CD4-positive, alpha-beta memory T cell (primary cell): ENCODE measurements at regions of chr6 and their contacts with region 1.

Region 1: DNA sequence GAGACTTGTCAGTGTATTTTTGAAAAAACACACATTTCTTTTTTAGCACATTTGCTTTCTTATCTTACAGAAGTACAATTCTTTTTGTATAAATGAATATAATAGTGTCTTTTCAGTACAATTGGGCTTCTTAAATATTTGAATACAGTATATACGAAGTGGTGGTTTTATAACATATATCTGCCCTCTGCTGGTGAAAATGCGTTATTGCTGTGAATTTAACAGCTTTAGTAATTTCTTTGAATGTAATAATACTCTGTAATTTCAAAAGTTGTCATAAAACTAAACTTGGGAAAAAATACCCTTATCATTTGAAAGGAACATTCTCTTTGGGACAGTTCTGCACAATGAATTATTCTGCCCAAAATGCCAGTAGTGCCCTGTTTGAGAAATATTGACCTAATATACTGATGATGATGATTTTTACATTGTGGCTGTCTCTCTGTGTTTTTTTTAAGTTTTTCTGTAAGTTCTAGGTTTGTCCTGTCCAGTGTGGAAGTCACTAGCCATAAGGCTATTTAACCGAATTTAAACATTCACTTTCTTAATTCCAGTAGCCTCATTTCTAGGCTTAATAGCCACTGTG is 19.0 kb downstream of the SMAP1 start:
- DNase-seq: peak in 4 of 5 donors; percentile 35 to 43 (median 38)
- H3K4me3 ChIP-seq: no peak overlapping the region
- H3K4me3 Mint-ChIP-seq: no peak overlapping the region
- H3K27ac ChIP-seq: no peak overlapping the region
- H3K27ac Mint-ChIP-seq: peak overlapping the region in 1 of 7 donors; percentile 40
- H3K4me1 ChIP-seq: peaks cover 32% of the 10 kb centered on the region
- H3K4me1 Mint-ChIP-seq: peaks cover 41 to 70% (median 48%) of the 10 kb centered on the region in 4 donors
- H3K27me3 ChIP-seq: no peaks in the 10 kb centered on the region
- H3K27me3 Mint-ChIP-seq: no peaks in the 10 kb centered on the region

Region 2: GRCh38 chr6:69835414-69836179 is 851.0 kb before region 1 on chr6:
- CTCF ChIA-PET with region 1: no interaction called
- POLR2A ChIA-PET with region 1: no interaction called
- intact Hi-C with region 1: no loop called
- DNase-seq: peak in 4 of 5 donors; percentile 26 to 39 (median 29)
- H3K4me3 ChIP-seq: no peak overlapping the region
- H3K4me3 Mint-ChIP-seq: peak overlapping the region in 1 of 8 donors; percentile 7
- H3K27ac ChIP-seq: no peak overlapping the region
- H3K27ac Mint-ChIP-seq: no peak overlapping the region
- H3K4me1 ChIP-seq: peaks cover 5% of the 10 kb centered on the region
- H3K4me1 Mint-ChIP-seq: peaks cover 0 to 7% (median 3%) of the 10 kb centered on the region in 4 donors
- H3K27me3 ChIP-seq: no peaks in the 10 kb centered on the region
- H3K27me3 Mint-ChIP-seq: peaks cover 9 to 11% of the 10 kb centered on the region in 2 donors

Region 3: DNA sequence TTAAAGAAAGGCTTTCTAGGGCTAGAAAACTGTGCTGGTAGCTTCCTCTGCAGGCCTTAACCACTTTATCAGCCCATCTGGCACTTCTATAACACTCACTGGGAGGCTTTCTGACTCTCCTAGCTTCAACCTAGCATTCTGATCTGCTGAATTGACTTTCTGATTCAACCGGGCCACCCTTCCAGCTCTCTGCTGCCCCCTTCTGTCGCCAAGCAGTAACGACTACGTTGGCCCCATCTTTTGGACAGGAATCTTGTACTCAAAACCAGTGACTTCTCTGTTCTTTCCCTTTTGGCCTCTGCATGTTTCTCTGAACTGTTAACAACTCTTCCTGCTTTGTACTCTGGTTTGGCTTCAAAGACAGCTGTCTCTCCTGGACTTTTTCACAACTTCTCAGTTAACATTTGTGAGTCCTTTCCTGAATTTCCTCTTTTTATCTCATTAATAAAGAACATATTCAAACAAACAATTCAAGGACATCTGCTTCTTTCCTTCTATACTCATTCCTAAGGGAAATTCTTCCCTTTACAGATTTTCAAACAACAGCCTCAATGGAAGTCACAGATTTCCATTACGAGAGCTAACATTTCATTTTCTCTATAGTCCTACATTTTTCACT is 317.2 kb before region 1 on chr6:
- CTCF ChIA-PET with region 1: interaction called, 10 read pairs
- POLR2A ChIA-PET with region 1: no interaction called
- intact Hi-C with region 1: loop called (anchors 1 kb)
- DNase-seq: peak; percentile 53 to 62 (median 58)
- H3K4me3 ChIP-seq: no peak overlapping the region
- H3K4me3 Mint-ChIP-seq: no peak overlapping the region
- H3K27ac ChIP-seq: no peak overlapping the region
- H3K27ac Mint-ChIP-seq: no peak overlapping the region
- H3K4me1 ChIP-seq: no peaks in the 10 kb centered on the region
- H3K4me1 Mint-ChIP-seq: no peaks in the 10 kb centered on the region
- H3K27me3 ChIP-seq: no peaks in the 10 kb centered on the region
- H3K27me3 Mint-ChIP-seq: peaks cover 6 to 16% of the 10 kb centered on the region in 2 donors

Region 4: GRCh38 chr6:70413114-70413991 is 273.3 kb before region 1 on chr6 and contains the start of gene FAM135A:
- CTCF ChIA-PET with region 1: no interaction called
- POLR2A ChIA-PET with region 1: no interaction called
- intact Hi-C with region 1: loop called (anchors 5 kb)
- DNase-seq: peak; percentile 90 to 96 (median 93)
- H3K4me3 ChIP-seq: peak within 1 kb of the TSS; percentile 59 to 62
- H3K4me3 Mint-ChIP-seq: peak within 1 kb of the TSS; percentile 93 to 97 (median 95)
- H3K27ac ChIP-seq: peak within 1 kb of the TSS; percentile 56
- H3K27ac Mint-ChIP-seq: peak within 1 kb of the TSS; percentile 90 to 96 (median 92)
- H3K4me1 ChIP-seq: peaks cover 17% of the 10 kb centered on the region
- H3K4me1 Mint-ChIP-seq: peaks cover 13 to 26% (median 20%) of the 10 kb centered on the region in 4 donors
- H3K27me3 ChIP-seq: no peaks in the 10 kb centered on the region
- H3K27me3 Mint-ChIP-seq: peaks cover 0 to 2% of the 10 kb centered on the region in 2 donors
- total RNA-seq, gene FAM135A: 11.3 to 14.5 TPM

Region 5: DNA sequence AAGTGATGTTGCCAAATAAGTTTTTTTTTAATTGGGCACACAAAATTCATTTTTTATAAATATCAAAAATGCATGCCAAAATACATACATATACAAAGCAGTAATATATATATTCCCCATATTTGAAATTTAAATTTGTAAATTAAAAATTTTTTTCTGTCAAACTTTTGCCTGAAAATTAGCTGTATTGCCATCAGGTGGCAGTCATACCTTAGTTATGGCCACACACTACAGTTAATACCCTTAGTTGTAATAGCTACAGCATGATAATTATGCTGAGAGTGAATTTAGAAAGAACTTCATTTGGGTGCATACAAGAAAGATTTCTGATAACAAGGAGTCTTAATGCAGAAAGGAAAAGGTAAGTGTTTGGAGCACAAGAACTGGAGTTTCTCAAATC is 166.1 kb before region 1 on chr6:
- CTCF ChIA-PET with region 1: interaction called, 30 read pairs
- POLR2A ChIA-PET with region 1: no interaction called
- intact Hi-C with region 1: loop called (anchors 1 kb)
- DNase-seq: peak; percentile 12 to 41 (median 28)
- H3K4me3 ChIP-seq: no peak overlapping the region
- H3K4me3 Mint-ChIP-seq: no peak overlapping the region
- H3K27ac ChIP-seq: no peak overlapping the region
- H3K27ac Mint-ChIP-seq: no peak overlapping the region
- H3K4me1 ChIP-seq: no peaks in the 10 kb centered on the region
- H3K4me1 Mint-ChIP-seq: peaks cover 0 to 7% (median 6%) of the 10 kb centered on the region in 4 donors
- H3K27me3 ChIP-seq: no peaks in the 10 kb centered on the region
- H3K27me3 Mint-ChIP-seq: no peaks in the 10 kb centered on the region

Region 6: DNA sequence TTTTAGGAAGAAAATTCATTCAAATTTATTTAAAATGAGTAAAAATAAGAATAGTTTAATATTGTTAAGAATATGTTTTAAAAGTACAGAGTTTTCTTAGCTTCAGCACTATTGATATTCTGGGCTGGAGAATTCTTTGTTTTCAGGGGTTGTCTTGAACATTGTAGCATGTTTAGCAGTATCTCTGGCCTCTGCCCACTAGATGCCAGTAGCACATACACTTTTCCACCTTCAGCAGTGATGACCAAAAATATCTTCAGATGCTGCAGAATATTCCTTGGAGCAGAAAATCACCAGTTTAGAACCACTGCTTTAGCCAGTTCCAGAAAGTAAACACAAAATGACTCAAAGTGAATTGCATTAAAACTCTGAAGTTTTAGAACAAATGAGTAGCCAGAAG is 139.3 kb before region 1 on chr6:
- CTCF ChIA-PET with region 1: interaction called, 39 read pairs
- POLR2A ChIA-PET with region 1: no interaction called
- intact Hi-C with region 1: loop called (anchors 1 kb)
- DNase-seq: peak in 2 of 5 donors; percentile 4 to 22
- H3K4me3 ChIP-seq: no peak overlapping the region
- H3K4me3 Mint-ChIP-seq: no peak overlapping the region
- H3K27ac ChIP-seq: no peak overlapping the region
- H3K27ac Mint-ChIP-seq: no peak overlapping the region
- H3K4me1 ChIP-seq: no peaks in the 10 kb centered on the region
- H3K4me1 Mint-ChIP-seq: no peaks in the 10 kb centered on the region
- H3K27me3 ChIP-seq: no peaks in the 10 kb centered on the region
- H3K27me3 Mint-ChIP-seq: no peaks in the 10 kb centered on the region

Region 7: GRCh38 chr6:70566751-70567382 is 119.8 kb before region 1 on chr6 and contains the start of gene SDHAF4:
- CTCF ChIA-PET with region 1: interaction called, 14 read pairs
- POLR2A ChIA-PET with region 1: interaction called, 3 read pairs
- intact Hi-C with region 1: loop called (anchors 1 kb)
- DNase-seq: peak; percentile 93 to 95 (median 94)
- H3K4me3 ChIP-seq: peak within 1 kb of the TSS; percentile 77 to 85
- H3K4me3 Mint-ChIP-seq: peak within 1 kb of the TSS; percentile 83 to 93 (median 91)
- H3K27ac ChIP-seq: peak within 1 kb of the TSS; percentile 81
- H3K27ac Mint-ChIP-seq: peak within 1 kb of the TSS; percentile 41 to 95 (median 92)
- H3K4me1 ChIP-seq: peaks cover 19% of the 10 kb centered on the region
- H3K4me1 Mint-ChIP-seq: peaks cover 13 to 25% (median 19%) of the 10 kb centered on the region in 4 donors
- H3K27me3 ChIP-seq: no peaks in the 10 kb centered on the region
- H3K27me3 Mint-ChIP-seq: no peaks in the 10 kb centered on the region
- total RNA-seq, gene SDHAF4: 12.3 to 13.8 TPM

Region 8: GRCh38 chr6:70667711-70668498 is 18.7 kb before region 1 on chr6 and contains the start of gene SMAP1:
- CTCF ChIA-PET with region 1: interaction called, 10 read pairs
- POLR2A ChIA-PET with region 1: interaction called, 7 read pairs
- intact Hi-C with region 1: loop called (anchors 2 kb)
- DNase-seq: peak; percentile 88 to 93 (median 89)
- H3K4me3 ChIP-seq: peak within 1 kb of the TSS; percentile 55 to 66
- H3K4me3 Mint-ChIP-seq: peak within 1 kb of the TSS; percentile 85 to 95 (median 90)
- H3K27ac ChIP-seq: peak within 1 kb of the TSS; percentile 82
- H3K27ac Mint-ChIP-seq: peak within 1 kb of the TSS; percentile 86 to 94 (median 92)
- H3K4me1 ChIP-seq: peaks cover 56% of the 10 kb centered on the region
- H3K4me1 Mint-ChIP-seq: peaks cover 47 to 60% (median 53%) of the 10 kb centered on the region in 4 donors
- H3K27me3 ChIP-seq: no peaks in the 10 kb centered on the region
- H3K27me3 Mint-ChIP-seq: peaks cover 0 to 1% of the 10 kb centered on the region in 2 donors
- total RNA-seq, gene SMAP1: 25.5 to 29.7 TPM

Region 9: GRCh38 chr6:70725817-70726415 is 39.3 kb after region 1 on chr6:
- CTCF ChIA-PET with region 1: no interaction called
- POLR2A ChIA-PET with region 1: no interaction called
- intact Hi-C with region 1: no loop called
- DNase-seq: no peak
- H3K4me3 ChIP-seq: no peak overlapping the region
- H3K4me3 Mint-ChIP-seq: no peak overlapping the region
- H3K27ac ChIP-seq: no peak overlapping the region
- H3K27ac Mint-ChIP-seq: peak overlapping the region in 1 of 7 donors; percentile 40
- H3K4me1 ChIP-seq: peaks cover 38% of the 10 kb centered on the region
- H3K4me1 Mint-ChIP-seq: peaks cover 39 to 74% (median 58%) of the 10 kb centered on the region in 4 donors
- H3K27me3 ChIP-seq: no peaks in the 10 kb centered on the region
- H3K27me3 Mint-ChIP-seq: no peaks in the 10 kb centered on the region